ENCODE measurements at regions of chr13 and their contacts with region 1.

Region 1: GRCh38 chr13:45178349-45179162 is 22.3 kb downstream of the KCTD4 start:
- DNase-seq: no peak
- H3K4me3 Mint-ChIP-seq: no peak overlapping the region
- H3K27ac Mint-ChIP-seq: no peak overlapping the region
- H3K4me1 Mint-ChIP-seq: peaks cover 20% of the 10 kb centered on the region
- H3K27me3 Mint-ChIP-seq: no peaks in the 10 kb centered on the region

Region 2: DNA sequence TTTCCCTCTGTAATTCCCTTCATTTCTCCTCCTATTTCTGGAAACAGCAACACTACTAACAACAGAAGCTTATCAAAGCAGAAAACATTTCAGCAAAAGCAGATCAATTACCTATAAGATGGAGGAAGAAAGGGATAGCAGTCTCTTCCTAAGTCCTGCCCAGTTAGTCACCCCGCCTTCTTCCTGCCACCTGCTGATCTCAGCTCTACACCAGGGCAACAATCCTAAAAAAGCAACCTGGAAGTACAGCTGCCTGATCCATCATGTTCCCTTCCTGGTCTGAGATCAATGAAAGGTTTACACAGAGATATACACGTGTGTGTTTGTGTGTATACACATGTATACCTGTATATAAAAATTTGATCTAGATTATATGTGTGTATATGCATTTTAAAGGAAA is 661.8 kb before region 1 on chr13:
- intact Hi-C with region 1: loop called (anchors 5 kb)
- DNase-seq: no peak
- H3K4me3 Mint-ChIP-seq: no peak overlapping the region
- H3K27ac Mint-ChIP-seq: no peak overlapping the region
- H3K4me1 Mint-ChIP-seq: peaks cover 4% of the 10 kb centered on the region
- H3K27me3 Mint-ChIP-seq: no peaks in the 10 kb centered on the region

Region 3: DNA sequence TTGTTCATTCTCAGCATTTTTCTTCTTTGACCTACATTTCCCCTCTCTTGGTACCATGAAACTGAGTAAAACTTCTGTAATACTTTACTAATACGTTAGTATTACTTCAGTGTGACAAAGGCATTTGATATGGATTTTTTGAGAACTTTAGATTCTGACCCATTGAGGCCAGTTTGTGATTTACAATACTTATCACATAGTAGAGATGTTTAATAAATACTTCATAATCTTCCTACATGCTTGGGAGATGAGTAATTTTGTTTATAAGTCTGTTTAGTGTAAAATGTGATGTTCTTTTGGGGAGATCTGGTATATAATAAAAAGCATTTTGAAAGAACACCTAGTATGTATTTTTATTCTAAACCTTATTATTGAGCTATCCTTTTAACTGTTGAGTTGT is 28.6 kb before region 1 on chr13:
- intact Hi-C with region 1: no loop called
- DNase-seq: no peak
- H3K4me3 Mint-ChIP-seq: no peak overlapping the region
- H3K27ac Mint-ChIP-seq: no peak overlapping the region
- H3K4me1 Mint-ChIP-seq: peaks cover 10% of the 10 kb centered on the region
- H3K27me3 Mint-ChIP-seq: no peaks in the 10 kb centered on the region

Measured in activated T-helper 2 cell treated with anti-CD3 and anti-CD28 coated beads, Interferon-gamma antibody, Interleukin-2, Interleukin-4, amounts not matched to agents 10 μg/mL and 5 μg/mL and 100 μg/mL, durations not matched to agents 14 hours and 24 hours and 36 hours (primary cell).